CD8-positive, alpha-beta T cell (primary cell): ENCODE measurements at regions of chr7 and their contacts with region 1.

Region 1: DNA sequence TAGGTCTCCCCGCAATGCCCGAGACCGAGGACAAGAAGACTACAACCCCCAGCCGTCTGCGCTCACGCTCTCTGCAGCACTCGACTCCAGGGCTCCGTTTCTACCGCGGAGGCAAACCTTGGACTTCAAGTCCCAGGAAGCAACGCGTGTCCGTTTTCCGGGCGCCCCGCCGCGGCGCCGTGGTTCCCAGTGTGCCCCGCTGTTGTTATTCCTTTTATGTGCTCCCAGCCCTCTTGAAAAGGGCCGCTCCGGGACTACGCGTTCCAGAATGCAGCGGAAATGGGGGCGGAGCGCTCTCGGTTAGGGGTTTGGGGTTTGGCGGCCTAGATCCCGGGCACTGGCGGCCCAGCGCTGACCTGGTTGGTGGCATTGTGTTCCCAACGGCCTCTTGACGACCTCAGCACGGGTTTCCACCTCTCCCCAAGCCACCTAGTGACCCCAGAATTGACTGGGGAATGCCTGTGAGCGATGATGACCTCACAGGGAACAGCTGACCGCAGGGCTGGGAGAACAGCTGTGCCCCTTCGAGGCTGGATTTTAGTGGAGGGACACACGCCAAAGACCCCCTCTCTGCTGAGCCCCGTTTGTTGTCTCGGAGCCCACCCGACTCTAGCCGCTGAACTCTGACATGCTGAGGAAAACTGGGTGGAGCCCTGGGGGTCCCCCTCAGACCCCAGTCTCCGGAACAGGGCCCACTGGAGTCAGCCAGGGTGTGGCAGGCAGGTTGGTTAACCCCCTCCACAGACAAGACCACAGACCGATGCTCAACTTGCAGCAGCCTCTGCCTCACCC is 488 bp upstream of the CDK5 start:
- DNase-seq: peak; percentile 93 to 100 (median 97)
- ATAC-seq: peak; percentile 93
- H3K4me3 ChIP-seq: peak overlapping the region; percentile 71 to 83
- H3K4me3 Mint-ChIP-seq: peak overlapping the region; percentile 78
- H3K27ac ChIP-seq: peak overlapping the region; percentile 65 to 87
- H3K27ac Mint-ChIP-seq: peak overlapping the region; percentile 89
- H3K4me1 ChIP-seq: peaks cover 34% of the 10 kb centered on the region
- H3K4me1 Mint-ChIP-seq: peaks cover 41% of the 10 kb centered on the region
- H3K27me3 ChIP-seq: no peaks in the 10 kb centered on the region
- H3K27me3 Mint-ChIP-seq: no peaks in the 10 kb centered on the region
- CTCF ChIP-seq: no peak

Region 2: GRCh38 chr7:149771721-149772240 is 1286.4 kb before region 1 on chr7:
- CTCF ChIA-PET with region 1: no interaction called
- POLR2A ChIA-PET with region 1: no interaction called
- intact Hi-C with region 1: loop called in 1 of 2 experiments (anchors 5 kb)
- DNase-seq: peak; percentile 70 to 91 (median 84)
- ATAC-seq: peak; percentile 88
- H3K4me3 ChIP-seq: peak overlapping the region; percentile 63 to 66
- H3K4me3 Mint-ChIP-seq: peak overlapping the region; percentile 71
- H3K27ac ChIP-seq: no peak overlapping the region
- H3K27ac Mint-ChIP-seq: no peak overlapping the region
- H3K4me1 ChIP-seq: peaks cover 12% of the 10 kb centered on the region
- H3K4me1 Mint-ChIP-seq: peaks cover 6% of the 10 kb centered on the region
- H3K27me3 ChIP-seq: no peaks in the 10 kb centered on the region
- H3K27me3 Mint-ChIP-seq: no peaks in the 10 kb centered on the region
- CTCF ChIP-seq: no peak

Region 3: GRCh38 chr7:150962553-150963399 is 95.4 kb before region 1 on chr7:
- CTCF ChIA-PET with region 1: interaction called, 5 read pairs
- POLR2A ChIA-PET with region 1: no interaction called
- intact Hi-C with region 1: loop called in 1 of 2 experiments (anchors 2 kb)
- DNase-seq: peak in 8 of 9 experiments; percentile 40 to 76 (median 66)
- ATAC-seq: peak; percentile 96
- H3K4me3 ChIP-seq: no peak overlapping the region
- H3K4me3 Mint-ChIP-seq: no peak overlapping the region
- H3K27ac ChIP-seq: no peak overlapping the region
- H3K27ac Mint-ChIP-seq: no peak overlapping the region
- H3K4me1 ChIP-seq: peaks cover 5% of the 10 kb centered on the region
- H3K4me1 Mint-ChIP-seq: peaks cover 6% of the 10 kb centered on the region
- H3K27me3 ChIP-seq: peaks cover 6 to 9% of the 10 kb centered on the region in 2 experiments
- H3K27me3 Mint-ChIP-seq: peaks cover 24% of the 10 kb centered on the region
- CTCF ChIP-seq: peak; percentile 86

Region 4: DNA sequence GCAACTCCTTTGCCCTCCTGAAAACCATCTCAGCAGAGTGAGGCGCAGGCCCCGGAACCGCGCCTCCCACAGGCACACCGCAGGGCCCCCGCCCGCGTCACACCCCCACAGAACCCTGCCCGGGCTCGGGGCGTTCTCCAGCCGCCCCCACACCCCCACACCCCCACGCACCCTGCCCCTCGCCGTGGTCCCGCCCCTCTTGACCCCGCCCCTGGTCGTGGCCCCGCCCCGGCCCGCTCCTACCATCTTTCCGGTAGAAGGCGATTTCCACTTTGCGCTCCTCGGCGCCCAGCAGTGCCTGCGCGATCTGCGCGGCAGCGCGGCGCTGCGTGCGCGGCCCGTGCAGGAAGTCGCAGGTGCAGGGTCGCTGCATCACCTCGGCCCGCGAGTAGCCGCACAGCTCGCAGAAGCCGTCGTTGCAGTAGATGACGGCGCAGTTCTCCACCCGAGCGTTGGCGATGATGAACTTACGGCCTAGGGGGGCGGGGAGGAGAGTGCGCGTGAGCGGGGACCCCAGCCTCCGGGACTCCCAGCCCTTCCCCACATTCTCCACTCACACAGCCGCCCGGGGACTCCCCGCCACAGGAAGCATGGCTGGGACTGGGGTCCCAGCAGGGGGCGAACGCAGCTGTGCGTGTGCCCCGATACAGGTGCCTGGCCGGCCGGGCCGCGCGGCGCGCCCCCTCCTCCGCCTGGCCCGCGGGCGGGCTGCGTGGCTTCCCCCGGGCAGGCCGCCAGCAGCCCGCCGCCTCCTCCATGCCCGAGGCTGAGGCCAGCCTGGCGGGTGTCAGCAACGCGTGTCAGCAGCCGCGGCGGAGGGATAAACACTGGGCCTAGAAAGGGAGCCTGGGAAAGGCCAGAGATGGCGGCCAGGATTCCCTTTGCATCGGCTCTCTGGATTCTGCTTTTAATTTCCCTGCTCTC is 83.5 kb before region 1 on chr7:
- CTCF ChIA-PET with region 1: no interaction called
- POLR2A ChIA-PET with region 1: no interaction called
- intact Hi-C with region 1: loop called in 1 of 2 experiments (anchors 2 kb)
- DNase-seq: peak; percentile 70 to 90 (median 80)
- ATAC-seq: peak; percentile 77
- H3K4me3 ChIP-seq: peak overlapping the region; percentile 63 to 69
- H3K4me3 Mint-ChIP-seq: peak overlapping the region; percentile 84
- H3K27ac ChIP-seq: peak overlapping the region; percentile 24 to 82
- H3K27ac Mint-ChIP-seq: peak overlapping the region; percentile 89
- H3K4me1 ChIP-seq: peaks cover 43% of the 10 kb centered on the region
- H3K4me1 Mint-ChIP-seq: peaks cover 38% of the 10 kb centered on the region
- H3K27me3 ChIP-seq: peaks cover 17 to 20% of the 10 kb centered on the region in 2 experiments
- H3K27me3 Mint-ChIP-seq: peaks cover 18% of the 10 kb centered on the region
- CTCF ChIP-seq: peak; percentile 24

Region 5: DNA sequence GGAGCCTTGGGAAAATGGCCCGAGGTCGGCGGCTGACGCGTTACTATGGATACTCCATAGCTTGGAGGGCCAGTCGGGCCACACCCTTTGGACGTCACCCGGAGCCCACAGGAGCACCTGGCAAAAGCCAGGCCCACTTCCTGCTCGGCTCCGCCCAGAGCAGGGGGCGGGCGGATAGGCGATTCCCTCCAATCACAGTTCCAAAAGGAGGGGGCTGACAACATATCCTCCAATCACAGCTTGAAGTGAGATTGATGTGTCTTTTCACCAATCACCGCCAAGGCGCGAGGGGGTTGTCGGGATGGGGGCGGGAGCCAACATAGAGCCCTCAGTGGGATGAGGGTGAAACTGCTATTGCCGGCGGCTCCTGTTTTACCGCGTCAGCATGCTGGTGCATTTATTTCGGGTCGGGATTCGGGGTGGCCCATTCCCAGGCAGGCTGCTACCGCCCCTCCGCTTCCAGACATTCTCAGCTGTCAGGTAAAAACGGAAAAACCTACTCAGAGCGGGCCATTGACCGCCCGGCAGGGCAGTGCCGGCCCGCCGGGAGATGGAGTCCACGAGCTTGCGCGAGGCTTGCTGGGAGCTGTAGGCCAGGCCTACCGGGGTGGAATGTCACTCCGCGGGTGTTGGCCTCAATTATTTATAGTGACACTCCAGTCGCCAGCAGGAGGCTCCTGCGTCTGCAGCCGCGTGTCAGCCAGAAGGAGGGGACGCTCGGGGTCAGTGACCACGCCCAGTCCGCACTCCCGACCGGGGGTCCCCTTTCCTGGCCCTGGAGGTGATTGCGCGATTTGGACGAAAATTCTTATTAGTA is 29.8 kb before region 1 on chr7 and contains the start of gene ABCB8:
- CTCF ChIA-PET with region 1: interaction called, 3 read pairs
- POLR2A ChIA-PET with region 1: interaction called, 8 read pairs
- intact Hi-C with region 1: loop called (anchors 1 kb)
- DNase-seq: peak; percentile 93 to 99 (median 98)
- ATAC-seq: peak; percentile 92
- H3K4me3 ChIP-seq: peak within 1 kb of the TSS; percentile 67 to 75
- H3K4me3 Mint-ChIP-seq: peak within 1 kb of the TSS; percentile 96
- H3K27ac ChIP-seq: peak within 1 kb of the TSS; percentile 94 to 96
- H3K27ac Mint-ChIP-seq: peak within 1 kb of the TSS; percentile 99
- H3K4me1 ChIP-seq: peaks cover 12% of the 10 kb centered on the region
- H3K4me1 Mint-ChIP-seq: peaks cover 24% of the 10 kb centered on the region
- H3K27me3 ChIP-seq: no peaks in the 10 kb centered on the region
- H3K27me3 Mint-ChIP-seq: no peaks in the 10 kb centered on the region
- CTCF ChIP-seq: peak; percentile 35
- total RNA-seq, gene ABCB8: 43.6 to 49.3 TPM